ENCODE measurements at regions of chr11 and their contacts with region 1.

Region 1: DNA sequence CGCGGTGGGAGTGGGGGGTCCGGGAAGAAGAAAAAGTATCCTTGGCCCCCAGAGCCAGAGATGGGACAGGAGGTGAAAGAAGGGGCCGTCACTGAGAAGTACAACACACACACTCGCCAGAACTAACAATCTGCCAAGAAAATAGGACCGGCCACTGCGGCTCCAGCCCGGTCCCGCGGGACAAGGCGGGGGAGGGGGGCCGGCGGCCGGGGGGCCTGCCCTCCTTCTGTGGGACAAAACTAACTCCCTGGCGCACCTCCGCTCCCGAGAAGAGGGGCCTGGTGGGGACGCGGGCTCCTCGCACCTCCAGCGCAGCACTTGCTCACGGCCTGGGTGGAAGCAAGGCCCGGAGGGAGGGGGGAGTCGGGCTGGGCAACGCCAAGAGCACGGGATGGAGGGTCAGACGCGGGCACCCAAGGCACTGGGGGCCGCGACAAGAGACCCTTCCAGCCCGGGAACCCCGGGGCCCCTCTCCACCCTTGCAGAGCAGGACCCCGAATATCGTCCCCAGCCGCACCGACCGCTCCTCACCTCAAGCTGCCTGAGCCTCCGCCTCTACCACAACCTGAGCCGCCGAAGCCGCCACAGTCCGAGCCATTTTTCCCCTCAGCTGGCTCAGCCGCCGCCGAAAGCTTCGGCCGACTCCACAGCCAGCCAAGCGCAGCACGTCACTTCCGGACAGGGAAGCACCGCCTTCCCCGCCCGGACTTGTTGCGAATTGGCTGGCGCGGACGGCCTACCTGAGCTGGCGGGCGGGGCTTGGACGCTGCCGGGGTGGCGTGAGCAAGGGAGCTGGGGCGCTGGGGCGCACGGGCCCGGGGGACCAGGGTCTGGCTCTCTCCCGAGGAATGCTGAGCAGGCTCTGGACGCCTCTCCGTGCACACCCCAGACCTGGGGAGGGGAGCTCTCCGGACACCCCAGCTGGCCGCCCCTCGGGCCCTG is at the start of gene PIK3C2A:
- DNase-seq: peak; percentile 95
- ATAC-seq: peak; percentile 96
- H3K4me3 ChIP-seq: peak within 1 kb of the TSS; percentile 82 to 99 (median 96)
- H3K4me3 Mint-ChIP-seq: peak within 1 kb of the TSS; percentile 98
- H3K27ac ChIP-seq: peak within 1 kb of the TSS; percentile 96 to 98
- H3K27ac Mint-ChIP-seq: peak within 1 kb of the TSS; percentile 94
- H3K4me1 ChIP-seq: peaks cover 22 to 29% of the 10 kb centered on the region in 2 donors
- H3K4me1 Mint-ChIP-seq: peaks cover 38% of the 10 kb centered on the region
- H3K27me3 ChIP-seq: no peaks in the 10 kb centered on the region
- H3K27me3 Mint-ChIP-seq: no peaks in the 10 kb centered on the region
- CTCF ChIP-seq: no peak
- total RNA-seq, gene PIK3C2A: 48.8 and 54.9 TPM in 2 replicates

Region 2: GRCh38 chr11:16738193-16738946 is 469.2 kb before region 1 on chr11 and contains the start of gene C11orf58:
- CTCF ChIA-PET with region 1: no interaction called
- POLR2A ChIA-PET with region 1: no interaction called
- intact Hi-C with region 1: loop called (anchors 1 kb)
- DNase-seq: peak; percentile 98
- ATAC-seq: peak; percentile 97
- H3K4me3 ChIP-seq: peak within 1 kb of the TSS; percentile 86 to 97 (median 95)
- H3K4me3 Mint-ChIP-seq: peak within 1 kb of the TSS; percentile 73
- H3K27ac ChIP-seq: peak within 1 kb of the TSS; percentile 98 to 99
- H3K27ac Mint-ChIP-seq: peak within 1 kb of the TSS; percentile 66
- H3K4me1 ChIP-seq: peaks cover 25 to 28% of the 10 kb centered on the region in 2 donors
- H3K4me1 Mint-ChIP-seq: peaks cover 20% of the 10 kb centered on the region
- H3K27me3 ChIP-seq: no peaks in the 10 kb centered on the region
- H3K27me3 Mint-ChIP-seq: no peaks in the 10 kb centered on the region
- CTCF ChIP-seq: no peak
- total RNA-seq, gene C11orf58: 125 and 129 TPM in 2 replicates

Region 3: DNA sequence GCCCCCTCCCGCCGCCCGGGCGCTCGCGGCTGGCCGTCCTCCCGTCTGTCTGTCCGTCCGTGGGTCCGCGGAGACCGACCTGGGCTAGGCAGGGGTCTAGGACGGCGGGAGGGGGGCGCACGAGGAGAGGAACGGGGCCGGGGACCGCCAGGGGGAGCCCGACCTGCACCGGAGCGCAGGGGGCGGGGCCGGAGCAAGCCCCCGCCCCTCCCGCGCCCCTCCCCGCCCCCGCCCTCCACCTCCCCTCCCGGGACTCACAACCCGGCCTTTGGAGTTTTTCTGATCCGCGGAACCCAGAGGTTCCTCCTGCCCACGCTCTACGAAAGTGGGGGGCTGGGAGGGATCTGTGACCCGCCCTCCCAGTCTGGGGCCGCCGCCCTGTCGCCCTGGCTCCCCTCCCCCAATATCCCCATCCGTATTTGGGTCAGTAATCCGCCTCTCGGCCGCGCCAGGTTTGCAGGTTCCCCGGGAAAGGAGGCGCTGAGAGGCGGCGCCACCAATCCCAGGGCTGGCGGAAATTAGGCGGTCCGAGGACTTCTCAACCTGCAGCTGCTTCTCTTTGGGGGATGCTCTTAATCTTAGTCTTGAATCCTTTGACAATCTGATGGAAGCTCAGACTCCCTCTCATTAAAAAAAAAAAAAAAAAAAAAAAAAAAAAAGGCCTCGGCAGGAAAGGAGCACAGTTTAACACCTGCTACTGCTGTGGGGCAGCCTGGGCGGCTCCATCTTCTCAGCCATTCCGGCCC is 181.8 kb after region 1 on chr11:
- CTCF ChIA-PET with region 1: no interaction called
- POLR2A ChIA-PET with region 1: no interaction called
- intact Hi-C with region 1: loop called (anchors 2 kb)
- DNase-seq: peak; percentile 88
- ATAC-seq: peak; percentile 94
- H3K4me3 ChIP-seq: peak overlapping the region; percentile 16 to 90 (median 63)
- H3K4me3 Mint-ChIP-seq: peak overlapping the region; percentile 85
- H3K27ac ChIP-seq: peak overlapping the region in 1 of 2 donors; percentile 29
- H3K27ac Mint-ChIP-seq: peak overlapping the region; percentile 59
- H3K4me1 ChIP-seq: peaks cover 4 to 33% of the 10 kb centered on the region in 2 donors
- H3K4me1 Mint-ChIP-seq: peaks cover 16% of the 10 kb centered on the region
- H3K27me3 ChIP-seq: peaks cover 0 to 2% (median 0%) of the 10 kb centered on the region in 4 experiments
- H3K27me3 Mint-ChIP-seq: peaks cover 5% of the 10 kb centered on the region
- CTCF ChIP-seq: peak; percentile 82